Psoas muscle (tissue), 8 donors: ENCODE measurements at regions of chr11 and their contacts with region 1.

Region 1: DNA sequence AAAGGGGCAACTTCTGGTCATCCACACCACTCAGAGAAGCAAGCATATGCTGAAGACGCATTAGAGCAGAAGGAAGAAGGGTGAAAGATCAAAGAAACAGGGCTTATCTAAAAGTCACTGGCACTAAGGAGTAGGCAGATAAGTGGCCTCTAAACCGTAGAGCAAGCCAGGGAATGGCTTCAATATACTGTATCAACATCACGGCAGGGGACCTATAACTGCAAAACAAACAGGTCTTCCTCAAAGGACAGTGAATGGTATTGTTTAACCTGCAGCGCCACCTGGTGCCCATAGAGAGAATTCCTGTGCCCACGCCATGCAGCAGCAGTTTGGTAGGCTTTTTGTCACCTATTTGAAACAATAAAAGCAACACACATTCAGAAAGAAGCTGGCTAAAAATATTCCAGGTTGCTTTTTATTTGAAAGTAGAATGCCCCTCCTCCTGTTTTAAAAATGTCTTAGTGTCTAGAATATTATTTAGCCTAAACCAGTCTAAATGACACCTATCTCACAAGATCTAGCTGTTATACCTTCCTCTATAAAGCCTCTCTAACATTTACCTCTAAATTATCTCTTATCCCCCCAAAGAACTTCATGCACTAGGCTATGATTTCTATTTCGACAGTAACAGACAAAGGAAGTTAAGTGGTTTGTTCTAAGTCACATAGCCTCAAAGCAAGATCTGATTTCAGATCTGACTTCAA is 21.8 kb downstream of the SNX19 start:
- DNase-seq: peak; percentile 64 to 79
- ATAC-seq: peak; percentile 59 to 74 (median 66)
- H3K4me3 ChIP-seq: no peak overlapping the region
- H3K27ac ChIP-seq: no peak overlapping the region
- H3K4me1 ChIP-seq: peaks cover 29% of the 10 kb centered on the region
- H3K27me3 ChIP-seq: no peaks in the 10 kb centered on the region
- CTCF ChIP-seq: peak; percentile 94

Region 2: GRCh38 chr11:130522284-130522961 is 372.1 kb before region 1 on chr11:
- intact Hi-C with region 1: no loop called
- DNase-seq: peak; percentile 91 to 96
- ATAC-seq: peak; percentile 98 to 99 (median 98)
- H3K4me3 ChIP-seq: no peak overlapping the region
- H3K27ac ChIP-seq: peak overlapping the region; percentile 84
- H3K4me1 ChIP-seq: peaks cover 23% of the 10 kb centered on the region
- H3K27me3 ChIP-seq: no peaks in the 10 kb centered on the region
- CTCF ChIP-seq: no peak

Region 3: GRCh38 chr11:130861902-130862860 is 32.3 kb before region 1 on chr11:
- intact Hi-C with region 1: loop called (anchors 2 to 5 kb)
- DNase-seq: peak; percentile 90 to 95
- ATAC-seq: peak; percentile 63 to 73 (median 69)
- H3K4me3 ChIP-seq: no peak overlapping the region
- H3K27ac ChIP-seq: peak overlapping the region; percentile 61
- H3K4me1 ChIP-seq: peaks cover 45% of the 10 kb centered on the region
- H3K27me3 ChIP-seq: no peaks in the 10 kb centered on the region
- CTCF ChIP-seq: peak; percentile 100

Region 4: GRCh38 chr11:130945896-130946295 is 51.4 kb after region 1 on chr11:
- intact Hi-C with region 1: no loop called
- DNase-seq: peak; percentile 54 to 59
- ATAC-seq: peak in 3 of 4 donors; percentile 43 to 66 (median 51)
- H3K4me3 ChIP-seq: no peak overlapping the region
- H3K27ac ChIP-seq: no peak overlapping the region
- H3K4me1 ChIP-seq: no peaks in the 10 kb centered on the region
- H3K27me3 ChIP-seq: peaks cover 0 to 7% (median 0%) of the 10 kb centered on the region in 3 donors
- CTCF ChIP-seq: no peak